Heart right ventricle (tissue), 16 donors: ENCODE measurements at regions of chr11 and their contacts with region 1.

Region 1: DNA sequence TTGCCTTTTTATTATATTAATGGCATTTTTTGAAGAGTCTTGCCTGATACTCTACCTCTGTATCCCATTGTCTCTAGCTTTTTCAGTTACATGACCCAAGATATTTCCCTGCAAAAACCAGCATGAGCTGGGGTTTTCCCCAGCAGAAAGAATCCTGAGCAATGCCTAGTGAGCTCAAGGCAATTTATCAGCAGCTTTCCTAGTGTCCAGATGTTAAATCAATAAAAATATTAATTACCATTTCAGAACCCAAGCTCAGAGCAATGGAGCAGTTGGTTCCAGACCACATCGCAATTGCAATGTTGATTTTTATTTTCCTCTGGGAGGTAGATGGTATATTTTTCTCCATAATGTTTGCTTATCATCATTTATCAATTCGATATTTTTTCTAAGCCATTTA is 137.2 kb downstream of the RAB38 start:
- DNase-seq: no peak
- ATAC-seq: no peak
- H3K4me3 ChIP-seq: no peak overlapping the region
- H3K27ac ChIP-seq: no peak overlapping the region
- H3K4me1 ChIP-seq: no peaks in the 10 kb centered on the region
- H3K27me3 ChIP-seq: peaks cover 0 to 12% (median 0%) of the 10 kb centered on the region in 7 donors
- CTCF ChIP-seq: no peak

Region 2: DNA sequence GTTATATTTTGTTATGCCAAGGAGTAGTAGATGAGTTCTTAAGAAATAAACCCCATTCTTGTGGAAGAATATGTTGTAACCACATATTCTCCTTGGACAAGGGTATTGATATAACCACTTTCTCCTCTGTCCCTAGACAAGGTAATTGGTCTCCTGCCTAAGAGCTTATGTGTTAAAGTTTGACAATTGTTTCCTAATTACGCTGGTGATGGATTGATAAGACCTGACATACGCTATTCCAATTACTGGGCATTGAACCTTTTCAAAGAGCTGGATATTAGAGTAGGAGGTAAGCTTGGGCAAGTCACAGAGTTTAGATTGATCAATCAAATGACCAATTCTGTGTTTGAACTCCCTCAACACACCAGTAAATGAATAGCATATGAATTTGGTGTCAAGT is 48.2 kb after region 1 on chr11:
- intact Hi-C with region 1: loop called in 1 of 10 experiments (anchors 1 kb)
- DNase-seq: no peak
- ATAC-seq: no peak
- H3K4me3 ChIP-seq: no peak overlapping the region
- H3K27ac ChIP-seq: no peak overlapping the region
- H3K4me1 ChIP-seq: no peaks in the 10 kb centered on the region
- H3K27me3 ChIP-seq: no peaks in the 10 kb centered on the region
- CTCF ChIP-seq: no peak